Ascending aorta (tissue), 2 donors: ENCODE measurements at regions of chrX and their contacts with region 1.

Region 1: DNA sequence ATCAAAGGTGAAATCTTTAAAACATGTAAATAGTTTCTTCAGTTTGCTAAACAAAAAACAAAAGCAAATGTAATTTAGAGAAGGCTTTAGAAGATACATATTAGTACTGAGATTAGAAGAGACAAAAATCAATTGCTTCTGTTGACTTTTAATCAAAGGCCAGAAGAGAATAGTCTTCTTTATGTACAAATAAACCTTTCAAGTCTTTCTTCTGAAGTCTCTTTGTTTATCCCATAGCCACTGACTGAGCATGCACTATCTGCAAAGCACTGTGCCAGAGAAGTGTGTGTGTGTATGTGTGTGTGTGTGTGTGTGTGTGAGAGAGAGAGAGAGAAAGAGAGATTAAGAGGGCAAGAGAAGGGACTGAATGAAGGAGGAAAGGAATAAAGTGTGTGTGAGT is 198.4 kb downstream of the GLUD2 start:
- DNase-seq: no peak
- H3K4me3 ChIP-seq: no peak overlapping the region
- H3K27ac ChIP-seq: no peak overlapping the region
- H3K4me1 ChIP-seq: no peaks in the 10 kb centered on the region
- H3K27me3 ChIP-seq: no peaks in the 10 kb centered on the region
- CTCF ChIP-seq: no peak

Region 2: DNA sequence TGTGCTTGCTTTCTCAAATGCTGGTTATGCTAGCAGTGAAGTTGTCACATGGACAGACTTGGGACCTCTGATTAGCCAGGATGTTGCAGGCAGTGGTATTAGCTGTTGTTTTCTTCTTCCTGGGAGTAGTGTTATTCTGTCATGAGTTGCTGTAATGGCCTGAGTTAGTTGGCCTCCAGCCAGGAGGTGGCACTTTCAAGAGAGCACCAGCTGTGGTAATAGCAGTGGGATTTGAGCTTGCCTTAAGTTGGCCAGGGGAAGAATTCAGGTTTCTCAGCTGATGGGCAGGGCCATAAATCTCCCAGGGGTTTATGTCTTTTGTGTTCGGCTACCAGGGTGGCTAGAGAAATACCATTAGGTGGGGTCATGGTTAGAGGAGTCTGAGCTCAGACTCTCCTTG is 65.8 kb before region 1 on chrX:
- intact Hi-C with region 1: loop called (anchors 10 kb)
- DNase-seq: no peak
- H3K4me3 ChIP-seq: no peak overlapping the region
- H3K27ac ChIP-seq: no peak overlapping the region
- H3K4me1 ChIP-seq: no peaks in the 10 kb centered on the region
- H3K27me3 ChIP-seq: no peaks in the 10 kb centered on the region
- CTCF ChIP-seq: no peak

Region 3: GRCh38 chrX:121479406-121479805 is 233.6 kb after region 1 on chrX:
- intact Hi-C with region 1: no loop called
- DNase-seq: no peak
- H3K4me3 ChIP-seq: no peak overlapping the region
- H3K27ac ChIP-seq: no peak overlapping the region
- H3K4me1 ChIP-seq: no peaks in the 10 kb centered on the region
- H3K27me3 ChIP-seq: no peaks in the 10 kb centered on the region
- CTCF ChIP-seq: no peak

Region 4: GRCh38 chrX:122464341-122464740 is 1218.6 kb after region 1 on chrX:
- intact Hi-C with region 1: no loop called
- DNase-seq: no peak
- H3K4me3 ChIP-seq: no peak overlapping the region
- H3K27ac ChIP-seq: no peak overlapping the region
- H3K4me1 ChIP-seq: no peaks in the 10 kb centered on the region
- H3K27me3 ChIP-seq: no peaks in the 10 kb centered on the region
- CTCF ChIP-seq: no peak